ENCODE measurements at regions of chr14 and their contacts with region 1.

Region 1: DNA sequence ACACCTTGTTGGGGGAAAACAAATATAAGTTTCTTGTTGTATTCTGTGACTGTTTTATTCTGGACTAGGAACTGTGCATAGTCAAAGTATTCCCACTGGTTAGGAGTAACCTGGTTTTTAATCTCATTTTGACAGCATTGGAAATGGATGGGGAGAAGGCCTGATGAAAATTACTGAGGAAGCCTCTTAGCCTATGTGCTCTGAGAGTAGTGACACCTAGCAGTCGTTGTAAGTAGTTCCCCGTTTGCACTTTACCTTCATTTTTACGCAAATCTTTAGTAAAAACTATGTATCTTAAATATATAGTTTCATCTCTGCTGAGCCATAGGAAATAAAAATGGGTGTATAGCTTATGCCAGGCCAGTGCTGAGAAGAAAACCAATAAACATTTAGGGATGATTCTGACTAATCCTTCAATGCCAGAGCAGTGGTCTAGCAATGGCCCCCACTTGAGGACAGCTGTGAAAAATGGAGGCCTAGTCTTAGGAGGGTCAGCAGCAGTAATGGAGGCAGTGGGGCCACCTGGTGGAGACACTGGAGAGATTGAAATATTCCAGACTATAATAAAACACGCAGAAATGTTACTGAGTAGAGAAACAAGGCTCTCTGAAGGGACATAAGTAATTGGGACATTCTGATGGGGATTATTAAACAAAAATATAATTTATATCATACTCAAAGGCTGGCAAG is 133.2 kb upstream of the NOVA1 start:
- DNase-seq: peak; percentile 39
- H3K4me3 ChIP-seq: no peak overlapping the region
- H3K27ac ChIP-seq: no peak overlapping the region
- H3K4me1 ChIP-seq: no peaks in the 10 kb centered on the region
- H3K27me3 ChIP-seq: no peaks in the 10 kb centered on the region
- CTCF ChIP-seq: peak; percentile 58 to 62
- POLR2A ChIP-seq: no peak

Region 2: DNA sequence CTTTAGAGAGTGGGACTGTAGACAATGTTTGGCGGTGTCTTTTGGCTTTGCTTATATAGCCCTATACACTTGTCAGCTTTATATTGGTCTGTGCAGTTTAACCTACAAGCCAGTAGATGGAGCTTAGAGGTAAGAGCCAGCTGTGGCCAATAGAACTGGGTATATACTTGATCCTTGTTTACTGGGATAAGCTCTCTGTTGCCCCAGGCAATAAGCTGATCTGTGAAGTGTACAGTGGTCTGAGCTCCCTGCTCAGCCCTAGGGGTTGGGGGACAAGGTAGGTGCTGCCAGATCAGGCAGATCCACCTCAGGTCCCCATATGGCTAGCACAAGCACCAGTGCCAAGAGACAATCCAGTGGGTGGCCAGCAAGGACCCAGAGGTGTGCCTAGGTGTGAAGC is 567.3 kb before region 1 on chr14:
- CTCF ChIA-PET with region 1: interaction called, 3 read pairs
- POLR2A ChIA-PET with region 1: no interaction called
- dilution Hi-C with region 1: no loop called
- intact Hi-C with region 1: loop called (anchors 2 kb)
- DNase-seq: peak; percentile 33
- H3K4me3 ChIP-seq: no peak overlapping the region
- H3K27ac ChIP-seq: no peak overlapping the region
- H3K4me1 ChIP-seq: no peaks in the 10 kb centered on the region
- H3K27me3 ChIP-seq: no peaks in the 10 kb centered on the region
- CTCF ChIP-seq: peak; percentile 9 to 49
- POLR2A ChIP-seq: no peak

Region 3: GRCh38 chr14:26394150-26394810 is 336.8 kb before region 1 on chr14:
- CTCF ChIA-PET with region 1: interaction called, 26 read pairs
- POLR2A ChIA-PET with region 1: no interaction called
- dilution Hi-C with region 1: no loop called
- intact Hi-C with region 1: loop called (anchors 1 kb)
- DNase-seq: peak; percentile 19
- H3K4me3 ChIP-seq: no peak overlapping the region
- H3K27ac ChIP-seq: no peak overlapping the region
- H3K4me1 ChIP-seq: no peaks in the 10 kb centered on the region
- H3K27me3 ChIP-seq: peaks cover 0 to 2% of the 10 kb centered on the region in 2 experiments
- CTCF ChIP-seq: peak in 1 of 2 donors; percentile 23
- POLR2A ChIP-seq: no peak

Region 4: DNA sequence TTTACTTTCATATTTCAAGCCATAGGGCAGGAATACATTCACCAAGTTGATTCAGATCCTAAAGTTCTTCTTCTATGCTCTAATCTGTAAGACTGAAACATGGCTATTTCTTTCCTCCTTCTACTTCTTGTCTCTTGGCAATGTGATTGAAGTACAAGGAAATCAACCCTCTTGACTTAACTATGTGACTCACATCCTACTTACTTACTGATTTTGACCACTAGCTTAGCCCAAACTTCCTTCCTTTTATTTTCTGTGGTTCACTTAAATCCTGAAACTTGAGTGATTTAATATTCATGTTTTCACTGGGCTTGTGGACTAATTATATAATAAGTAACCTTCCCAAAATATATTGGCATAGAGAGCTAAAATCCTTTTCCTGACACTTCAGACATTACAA is 22.1 kb before region 1 on chr14:
- CTCF ChIA-PET with region 1: interaction called, 10 read pairs
- POLR2A ChIA-PET with region 1: no interaction called
- dilution Hi-C with region 1: no loop called
- intact Hi-C with region 1: no loop called
- DNase-seq: peak; percentile 84
- H3K4me3 ChIP-seq: no peak overlapping the region
- H3K27ac ChIP-seq: peak overlapping the region; percentile 12
- H3K4me1 ChIP-seq: peaks cover 15% of the 10 kb centered on the region
- H3K27me3 ChIP-seq: no peaks in the 10 kb centered on the region
- CTCF ChIP-seq: no peak
- POLR2A ChIP-seq: peak; percentile 37

Region 5: DNA sequence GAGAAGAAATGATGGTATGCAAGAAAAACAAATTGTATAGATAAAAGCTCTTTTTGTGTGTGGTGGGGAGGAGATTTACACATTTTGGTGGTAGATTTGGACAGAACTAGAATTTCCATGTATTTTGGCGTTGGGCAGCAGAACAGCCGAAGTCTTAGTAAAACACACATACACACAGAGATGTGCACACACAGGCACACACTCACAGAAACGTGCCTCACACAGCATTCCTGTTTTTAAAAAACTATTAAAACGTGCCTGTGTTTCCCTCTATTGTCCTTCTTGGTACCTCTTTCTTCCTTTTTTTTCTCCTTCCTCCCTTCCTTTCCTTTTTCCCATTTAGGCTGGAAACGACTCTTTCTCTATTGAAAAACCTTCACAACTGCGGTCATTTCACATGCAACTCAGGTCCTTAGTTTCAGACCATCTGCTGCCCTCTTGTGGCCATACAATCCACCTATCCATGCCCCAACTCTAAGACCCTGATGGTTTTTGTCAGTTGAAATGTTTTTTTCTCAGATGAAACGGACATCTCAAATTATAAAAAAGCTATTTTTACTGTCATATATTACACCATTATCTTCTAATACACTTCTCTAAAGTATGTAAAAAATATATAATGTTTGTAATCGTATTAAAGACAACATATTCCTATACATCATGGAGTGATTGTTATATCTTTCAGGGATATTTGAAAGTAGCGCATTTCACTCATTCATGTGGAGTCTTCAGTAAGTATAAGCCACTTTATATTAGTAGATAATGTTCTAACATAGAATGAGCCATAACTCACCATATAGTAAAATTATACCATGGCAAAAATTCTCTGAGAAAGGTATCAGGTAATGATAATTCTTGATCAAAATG is 253.5 kb after region 1 on chr14:
- CTCF ChIA-PET with region 1: no interaction called
- POLR2A ChIA-PET with region 1: no interaction called
- dilution Hi-C with region 1: no loop called
- intact Hi-C with region 1: loop called (anchors 1 kb)
- DNase-seq: peak; percentile 57
- H3K4me3 ChIP-seq: no peak overlapping the region
- H3K27ac ChIP-seq: no peak overlapping the region
- H3K4me1 ChIP-seq: no peaks in the 10 kb centered on the region
- H3K27me3 ChIP-seq: no peaks in the 10 kb centered on the region
- CTCF ChIP-seq: peak; percentile 67
- POLR2A ChIP-seq: no peak

Measured in endothelial cell of umbilical vein (primary cell).